ENCODE measurements at regions of chr4 and their contacts with region 1.

Region 1: GRCh38 chr4:41214136-41214824 is at the start of gene APBB2:
- DNase-seq: peak; percentile 49
- ATAC-seq: peak; percentile 78
- H3K4me3 ChIP-seq: peak within 1 kb of the TSS; percentile 83
- H3K27ac ChIP-seq: peak within 1 kb of the TSS; percentile 71; the same call in 1 of the 2 replicates
- H3K4me1 ChIP-seq: no peaks in the 10 kb centered on the region; the same call in 1 of the 2 replicates
- H3K27me3 ChIP-seq: no peaks in the 10 kb centered on the region
- CTCF ChIP-seq: peak; percentile 56 to 86 (median 77)
- EP300 ChIP-seq: no peak
- POLR2A ChIP-seq: peak; percentile 79
- RAD21 ChIP-seq: peak; percentile 65
- polyA plus RNA-seq, gene APBB2: 2.7 to 3.1 TPM

Region 2: GRCh38 chr4:40736910-40737309 is 477.4 kb before region 1 on chr4:
- CTCF ChIA-PET with region 1: no interaction called
- POLR2A ChIA-PET with region 1: no interaction called
- RAD21 ChIA-PET with region 1: no interaction called
- SMC1A ChIA-PET with region 1: no interaction called
- in situ Hi-C with region 1: loop called (anchors 10 kb)
- intact Hi-C with region 1: loop called (anchors 10 kb)
- DNase-seq: no peak
- ATAC-seq: peak; percentile 84
- H3K4me3 ChIP-seq: no peak overlapping the region
- H3K27ac ChIP-seq: no peak overlapping the region
- H3K4me1 ChIP-seq: no peaks in the 10 kb centered on the region
- H3K27me3 ChIP-seq: no peaks in the 10 kb centered on the region
- CTCF ChIP-seq: peak; percentile 43 to 68 (median 47); a peak in 5 of 6 replicates
- EP300 ChIP-seq: no peak
- POLR2A ChIP-seq: no peak
- RAD21 ChIP-seq: peak; percentile 94

Region 3: GRCh38 chr4:40976343-40976742 is 237.9 kb before region 1 on chr4:
- CTCF ChIA-PET with region 1: interaction called, 567 read pairs
- POLR2A ChIA-PET with region 1: interaction called, 6 read pairs
- RAD21 ChIA-PET with region 1: interaction called, 262 read pairs
- SMC1A ChIA-PET with region 1: interaction called, 362 read pairs
- in situ Hi-C with region 1: loop called (anchors 5 kb)
- intact Hi-C with region 1: loop called (anchors 1 kb)
- DNase-seq: no peak
- ATAC-seq: peak; percentile 80
- H3K4me3 ChIP-seq: no peak overlapping the region
- H3K27ac ChIP-seq: no peak overlapping the region
- H3K4me1 ChIP-seq: no peaks in the 10 kb centered on the region
- H3K27me3 ChIP-seq: no peaks in the 10 kb centered on the region
- CTCF ChIP-seq: peak; percentile 48 to 62 (median 59); a peak in 5 of 6 replicates
- EP300 ChIP-seq: no peak
- POLR2A ChIP-seq: no peak
- RAD21 ChIP-seq: peak; percentile 72

Region 4: DNA sequence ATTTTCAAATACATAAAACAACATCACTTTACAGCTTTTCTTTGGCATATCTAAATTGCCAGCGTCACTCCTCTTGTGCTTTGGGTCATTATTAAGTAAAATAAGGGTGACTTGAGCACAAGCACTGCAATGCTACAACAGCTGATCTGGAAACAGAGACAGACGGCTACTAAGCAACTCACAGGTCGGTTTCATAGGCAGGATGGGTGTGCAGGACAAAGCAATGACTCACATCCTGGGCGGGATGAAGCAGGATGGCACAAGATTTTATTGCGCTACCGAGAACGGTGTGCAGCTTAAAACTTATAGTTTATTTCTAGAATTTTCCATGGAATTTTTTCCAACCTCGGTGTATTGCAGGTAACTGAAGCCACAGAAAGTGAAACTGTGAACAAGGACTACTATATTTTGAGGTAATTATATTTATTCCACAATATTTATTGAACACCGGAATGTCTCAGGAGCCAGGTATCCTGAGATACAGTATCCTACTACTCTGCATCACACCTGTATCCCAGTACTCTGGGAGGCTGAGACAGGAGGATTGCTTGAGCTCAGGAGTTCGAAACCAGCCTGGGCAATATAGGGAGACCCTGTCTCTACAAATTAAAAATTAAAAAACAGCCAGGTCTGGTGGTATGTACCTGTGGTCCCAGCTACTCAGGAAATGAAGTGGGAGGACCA is 215.5 kb before region 1 on chr4:
- CTCF ChIA-PET with region 1: interaction called, 19 read pairs
- POLR2A ChIA-PET with region 1: no interaction called
- RAD21 ChIA-PET with region 1: interaction called, 12 read pairs
- SMC1A ChIA-PET with region 1: interaction called, 20 read pairs
- in situ Hi-C with region 1: no loop called
- intact Hi-C with region 1: no loop called
- DNase-seq: no peak
- ATAC-seq: no peak
- H3K4me3 ChIP-seq: no peak overlapping the region
- H3K27ac ChIP-seq: no peak overlapping the region
- H3K4me1 ChIP-seq: peaks cover 4% of the 10 kb centered on the region
- H3K27me3 ChIP-seq: no peaks in the 10 kb centered on the region
- CTCF ChIP-seq: no peak
- EP300 ChIP-seq: no peak
- POLR2A ChIP-seq: no peak
- RAD21 ChIP-seq: no peak

Region 5: GRCh38 chr4:41061482-41062185 is 152.6 kb before region 1 on chr4:
- CTCF ChIA-PET with region 1: interaction called, 3 read pairs
- POLR2A ChIA-PET with region 1: interaction called, 3 read pairs
- RAD21 ChIA-PET with region 1: interaction called, 9 read pairs
- SMC1A ChIA-PET with region 1: interaction called, 10 read pairs
- in situ Hi-C with region 1: no loop called
- intact Hi-C with region 1: no loop called
- DNase-seq: no peak
- ATAC-seq: no peak
- H3K4me3 ChIP-seq: no peak overlapping the region
- H3K27ac ChIP-seq: no peak overlapping the region
- H3K4me1 ChIP-seq: no peaks in the 10 kb centered on the region; the same call in 1 of the 2 replicates
- H3K27me3 ChIP-seq: no peaks in the 10 kb centered on the region
- CTCF ChIP-seq: no peak
- EP300 ChIP-seq: no peak
- POLR2A ChIP-seq: no peak
- RAD21 ChIP-seq: no peak

Region 6: DNA sequence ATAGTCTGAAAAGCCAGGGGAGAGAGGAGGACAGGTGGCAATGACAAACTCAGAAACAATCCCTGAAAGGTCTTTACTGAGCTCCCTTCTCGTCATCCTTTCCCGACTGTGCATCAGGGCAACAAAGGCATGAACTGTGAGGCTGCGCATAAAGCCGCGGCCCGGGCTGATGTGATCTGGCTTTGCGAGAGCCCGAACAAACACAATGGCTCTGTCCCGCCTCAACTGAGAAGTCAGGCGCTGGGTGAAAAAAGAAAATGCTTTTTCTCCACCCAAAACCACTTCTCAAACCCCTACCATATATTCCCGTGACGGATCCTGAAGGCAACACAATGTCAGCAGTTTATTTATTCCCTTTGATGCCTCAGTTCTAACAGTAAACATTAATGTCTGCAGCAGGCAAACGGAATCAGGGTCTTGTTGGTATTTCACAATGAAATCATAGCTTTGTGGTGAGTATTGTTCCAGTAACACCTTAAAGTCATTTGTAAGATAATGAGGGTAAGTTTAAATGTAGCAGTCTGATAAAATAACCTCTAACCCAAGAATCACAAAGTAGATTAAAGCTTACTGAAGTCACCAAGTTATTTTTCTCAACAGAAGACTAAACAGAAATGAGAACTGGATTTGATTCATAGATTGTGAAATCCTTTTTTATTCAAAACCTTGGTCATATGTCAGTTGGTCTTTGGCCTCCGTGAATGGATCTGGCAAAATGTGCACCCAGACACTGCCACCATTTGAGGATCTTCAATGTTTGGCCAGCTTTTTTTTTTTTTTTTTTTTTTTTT is 67.4 kb before region 1 on chr4:
- CTCF ChIA-PET with region 1: no interaction called
- POLR2A ChIA-PET with region 1: no interaction called
- RAD21 ChIA-PET with region 1: no interaction called
- SMC1A ChIA-PET with region 1: interaction called, 3 read pairs
- in situ Hi-C with region 1: no loop called
- intact Hi-C with region 1: loop called (anchors 5 kb)
- DNase-seq: no peak
- ATAC-seq: no peak
- H3K4me3 ChIP-seq: no peak overlapping the region
- H3K27ac ChIP-seq: peak overlapping the region; percentile 38
- H3K4me1 ChIP-seq: peaks cover 22% of the 10 kb centered on the region
- H3K27me3 ChIP-seq: no peaks in the 10 kb centered on the region
- CTCF ChIP-seq: no peak
- EP300 ChIP-seq: no peak
- POLR2A ChIP-seq: no peak
- RAD21 ChIP-seq: no peak

Region 7: GRCh38 chr4:41751449-41752061 is 537.3 kb after region 1 on chr4:
- CTCF ChIA-PET with region 1: no interaction called
- POLR2A ChIA-PET with region 1: no interaction called
- RAD21 ChIA-PET with region 1: no interaction called
- SMC1A ChIA-PET with region 1: no interaction called
- in situ Hi-C with region 1: no loop called
- intact Hi-C with region 1: no loop called
- DNase-seq: no peak
- ATAC-seq: peak; percentile 48; the same call in 1 of the 3 replicates
- H3K4me3 ChIP-seq: no peak overlapping the region
- H3K27ac ChIP-seq: no peak overlapping the region
- H3K4me1 ChIP-seq: no peaks in the 10 kb centered on the region
- H3K27me3 ChIP-seq: peaks cover 8 to 16% of the 10 kb centered on the region in 2 experiments
- CTCF ChIP-seq: peak in 1 of 3 experiments; percentile 20; a peak in 1 of 6 replicates
- EP300 ChIP-seq: no peak
- POLR2A ChIP-seq: no peak
- RAD21 ChIP-seq: no peak